ENCODE measurements at regions of chr15 and their contacts with region 1.

Region 1: GRCh38 chr15:98548154-98548971 is 100.0 kb upstream of the IGF1R start:
- DNase-seq: peak; percentile 79
- ATAC-seq: peak; percentile 96
- H3K4me3 Mint-ChIP-seq: peak overlapping the region; percentile 77
- H3K27ac Mint-ChIP-seq: peak overlapping the region; percentile 96
- H3K4me1 Mint-ChIP-seq: peaks cover 17% of the 10 kb centered on the region
- H3K27me3 Mint-ChIP-seq: peaks cover 41% of the 10 kb centered on the region

Region 2: DNA sequence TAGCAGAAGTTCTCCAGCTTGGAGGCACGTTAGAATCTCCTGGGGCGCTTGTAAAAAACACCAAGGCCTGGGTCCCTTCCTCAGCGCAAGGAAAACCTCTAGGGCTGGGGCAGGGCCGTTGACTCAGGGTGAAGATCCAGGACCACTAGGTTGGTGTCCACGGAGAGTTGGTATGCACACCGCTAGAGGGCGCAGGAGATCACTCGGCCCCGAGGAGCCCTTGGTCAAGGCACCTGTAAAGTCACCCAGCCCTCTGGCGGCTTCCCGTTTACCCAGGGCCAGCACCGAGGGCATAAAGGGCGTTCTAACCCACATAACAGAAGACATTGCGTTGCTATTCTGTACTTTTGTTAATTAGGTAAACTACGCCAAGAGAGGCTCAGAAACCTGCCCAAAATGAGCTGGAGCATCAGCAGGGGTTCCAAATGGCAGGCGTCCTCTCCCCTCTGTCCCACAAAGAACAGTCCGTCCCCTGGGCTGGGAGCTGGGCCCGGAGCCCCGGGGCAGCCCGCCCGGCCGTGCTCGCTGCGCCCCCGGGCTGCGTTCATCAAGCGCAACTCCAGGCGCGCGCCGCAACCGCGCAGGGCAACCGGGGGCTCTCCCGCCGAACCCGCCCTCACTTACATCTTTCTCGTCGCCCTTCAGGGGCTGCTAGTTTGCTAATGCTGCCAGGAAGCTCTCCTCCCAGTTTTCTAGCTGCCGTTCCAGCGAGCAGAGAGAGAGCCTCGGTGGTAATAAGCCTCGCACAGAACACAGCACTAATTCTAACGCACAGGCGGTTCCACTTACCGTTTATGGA is 255.7 kb before region 1 on chr15:
- CTCF ChIA-PET with region 1: no interaction called
- POLR2A ChIA-PET with region 1: no interaction called
- intact Hi-C with region 1: no loop called
- DNase-seq: peak; percentile 75
- ATAC-seq: peak; percentile 66
- H3K4me3 Mint-ChIP-seq: no peak overlapping the region
- H3K27ac Mint-ChIP-seq: no peak overlapping the region
- H3K4me1 Mint-ChIP-seq: peaks cover 1% of the 10 kb centered on the region
- H3K27me3 Mint-ChIP-seq: peaks cover 16% of the 10 kb centered on the region

Region 3: DNA sequence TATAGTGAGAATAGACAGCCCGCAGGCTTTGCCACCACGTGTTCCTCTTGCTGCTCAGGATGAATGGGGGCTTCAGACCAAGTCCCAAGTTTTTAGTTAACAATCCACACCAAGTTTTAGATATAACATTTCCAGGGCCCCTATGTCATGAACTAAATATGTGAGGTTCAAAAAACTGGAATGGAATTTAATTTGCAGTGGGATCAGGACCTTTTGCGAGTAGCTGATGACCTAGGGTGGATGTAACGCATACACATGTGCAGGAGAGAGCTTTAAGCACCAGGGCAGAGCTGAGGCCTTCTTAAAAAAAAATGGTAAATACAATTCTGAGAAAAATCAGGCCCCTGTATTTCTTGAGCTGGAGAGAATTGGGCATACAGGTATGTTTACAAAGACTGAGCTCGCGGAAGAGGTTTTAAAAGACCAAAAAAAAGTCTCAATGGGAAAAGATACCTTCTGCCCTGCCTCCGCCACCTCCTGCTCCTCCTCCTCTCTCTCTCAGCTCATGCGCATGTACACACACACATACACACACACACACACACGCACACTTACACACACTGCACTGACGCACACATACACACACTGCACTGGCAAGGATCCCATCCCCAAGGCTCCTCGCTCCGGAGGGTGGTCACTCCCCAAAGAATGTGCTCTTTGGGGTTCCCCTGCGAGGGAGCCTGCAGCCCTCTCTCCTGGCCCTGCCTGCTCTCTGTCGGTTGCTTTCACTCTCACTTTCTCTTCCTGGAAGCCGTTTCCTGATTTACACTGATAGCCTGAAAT is 51.7 kb after region 1 on chr15:
- CTCF ChIA-PET with region 1: interaction called, 3 read pairs
- POLR2A ChIA-PET with region 1: no interaction called
- intact Hi-C with region 1: loop called in 1 of 2 experiments (anchors 5 kb)
- DNase-seq: peak; percentile 70
- ATAC-seq: peak; percentile 91
- H3K4me3 Mint-ChIP-seq: peak overlapping the region; percentile 77
- H3K27ac Mint-ChIP-seq: peak overlapping the region; percentile 92
- H3K4me1 Mint-ChIP-seq: peaks cover 17% of the 10 kb centered on the region
- H3K27me3 Mint-ChIP-seq: no peaks in the 10 kb centered on the region

Measured in activated CD4-positive, alpha-beta T cell treated with anti-CD3 and anti-CD28 coated beads for 36 hours (primary cell).